Esophagus muscularis mucosa (tissue), 4 donors: ENCODE measurements at regions of chr7 and their contacts with region 1.

Region 1: GRCh38 chr7:77759294-77759889 is 38.8 kb downstream of the TMEM60 start:
- DNase-seq: no peak
- H3K4me3 ChIP-seq: no peak overlapping the region
- H3K27ac ChIP-seq: peak overlapping the region; percentile 1 to 39 (median 10)
- H3K4me1 ChIP-seq: peaks cover 13 to 65% (median 61%) of the 10 kb centered on the region in 4 donors
- H3K27me3 ChIP-seq: no peaks in the 10 kb centered on the region
- CTCF ChIP-seq: peak; percentile 79 to 84 (median 84)
- EP300 ChIP-seq: no peak
- POLR2A ChIP-seq: no peak

Region 2: DNA sequence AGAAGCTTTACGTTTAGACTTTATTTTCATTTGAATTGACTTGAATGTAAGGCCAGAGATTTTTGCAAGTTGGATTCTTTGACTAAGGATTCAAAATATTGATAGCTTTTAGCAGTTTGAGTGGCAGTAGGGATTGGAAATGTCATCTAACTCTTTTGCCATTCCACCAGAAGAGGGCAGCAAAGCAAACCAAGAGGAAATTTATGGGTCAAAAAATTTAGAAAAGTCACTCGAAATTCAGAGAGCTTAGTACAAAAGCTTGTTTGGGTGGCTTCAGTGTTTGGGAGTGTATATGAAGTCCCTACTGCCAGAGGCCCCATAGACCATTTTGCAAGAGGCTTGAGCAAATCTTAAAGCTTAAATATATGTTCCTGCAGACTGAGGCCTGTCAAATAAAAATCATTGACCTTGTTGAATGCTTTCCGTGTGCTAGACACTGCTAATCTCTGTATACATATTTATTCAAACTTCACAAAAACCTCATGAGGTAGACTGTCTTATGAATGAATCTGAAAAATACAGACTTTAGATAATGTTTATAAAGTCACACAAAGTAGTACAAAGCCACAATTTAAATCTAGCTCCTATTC is 107.7 kb before region 1 on chr7:
- intact Hi-C with region 1: loop called (anchors 2 kb)
- DNase-seq: no peak
- H3K4me3 ChIP-seq: no peak overlapping the region
- H3K27ac ChIP-seq: no peak overlapping the region
- H3K4me1 ChIP-seq: peaks cover 0 to 5% (median 0%) of the 10 kb centered on the region in 4 donors
- H3K27me3 ChIP-seq: no peaks in the 10 kb centered on the region
- CTCF ChIP-seq: peak; percentile 60 to 70 (median 69)
- EP300 ChIP-seq: no peak
- POLR2A ChIP-seq: no peak

Region 3: DNA sequence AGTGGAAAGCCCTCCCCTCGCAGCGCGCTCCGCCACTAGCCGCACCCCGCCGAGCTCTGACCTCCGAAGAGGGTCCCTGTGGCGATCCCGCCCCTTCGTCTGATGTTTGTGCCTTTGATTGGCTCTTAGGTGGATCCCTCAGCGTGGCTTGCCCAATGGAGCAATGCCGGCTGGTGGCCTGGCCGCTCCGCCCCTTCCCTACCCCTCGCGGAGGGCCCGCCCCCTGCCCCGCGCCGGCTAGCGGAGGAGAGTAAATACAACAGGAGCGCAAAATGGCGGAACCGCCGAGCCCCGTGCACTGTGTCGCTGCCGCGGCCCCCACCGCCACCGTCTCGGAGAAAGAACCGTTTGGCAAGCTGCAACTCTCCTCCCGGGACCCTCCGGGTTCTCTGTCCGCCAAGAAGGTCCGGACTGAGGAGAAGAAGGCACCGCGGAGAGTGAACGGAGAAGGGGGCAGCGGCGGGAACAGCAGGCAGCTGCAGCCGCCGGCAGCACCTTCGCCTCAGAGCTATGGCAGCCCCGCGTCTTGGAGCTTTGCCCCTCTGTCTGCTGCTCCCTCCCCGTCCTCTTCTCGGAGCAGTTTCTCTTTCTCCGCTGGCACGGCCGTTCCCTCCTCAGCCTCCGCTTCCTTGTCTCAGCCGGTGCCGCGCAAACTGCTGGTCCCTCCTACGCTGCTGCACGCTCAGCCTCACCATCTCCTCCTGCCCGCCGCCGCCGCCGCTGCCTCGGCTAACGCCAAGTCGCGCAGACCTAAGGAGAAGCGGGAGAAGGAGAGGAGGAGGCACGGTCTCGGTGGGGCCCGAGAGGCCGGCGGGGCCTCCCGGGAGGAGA is 63.0 kb before region 1 on chr7 and contains the start of gene RSBN1L:
- intact Hi-C with region 1: loop called (anchors 5 kb)
- DNase-seq: peak; percentile 99
- H3K4me3 ChIP-seq: peak within 1 kb of the TSS; percentile 81 to 99 (median 86)
- H3K27ac ChIP-seq: peak within 1 kb of the TSS; percentile 96 to 99 (median 96)
- H3K4me1 ChIP-seq: peaks cover 35 to 73% (median 71%) of the 10 kb centered on the region in 4 donors
- H3K27me3 ChIP-seq: no peaks in the 10 kb centered on the region
- CTCF ChIP-seq: peak in 2 of 3 experiments; percentile 19 to 55
- EP300 ChIP-seq: no peak
- POLR2A ChIP-seq: peak; percentile 54
- total RNA-seq, gene RSBN1L: 17.0 to 36.5 (median 25.9) TPM